ENCODE measurements at regions of chr17 and their contacts with region 1.

Region 1: DNA sequence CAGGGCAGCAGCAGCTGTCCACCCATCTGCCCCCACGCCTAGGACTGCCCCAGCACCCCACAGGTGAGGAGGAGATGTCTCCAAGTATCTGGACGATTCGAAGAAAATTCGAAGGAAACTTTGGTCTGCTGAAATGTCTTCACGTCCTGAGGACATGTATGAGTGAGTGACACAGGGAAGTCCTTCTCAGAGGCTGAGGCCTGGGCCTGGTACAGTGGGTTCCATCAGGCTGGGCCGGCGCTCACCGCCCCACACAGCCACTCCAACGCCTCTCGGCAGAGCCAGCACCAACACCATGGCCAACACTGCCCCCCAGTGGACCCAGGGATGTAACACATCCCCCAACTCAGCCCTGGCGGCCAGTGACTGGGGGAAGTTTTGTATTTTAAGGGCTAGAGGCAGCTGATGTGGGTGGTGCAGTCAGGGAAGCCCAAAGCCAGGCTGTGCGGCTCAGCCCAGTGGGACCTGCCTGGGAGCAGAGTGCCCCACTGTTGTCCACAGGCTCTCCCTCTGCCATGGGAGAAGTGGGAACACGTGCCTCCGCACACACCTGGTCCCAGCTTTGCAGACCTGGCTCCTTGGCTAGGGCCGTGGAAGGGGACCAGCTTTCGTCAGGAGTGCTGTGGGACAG is 55.8 kb upstream of the FASN start:
- DNase-seq: peak; percentile 67 to 74
- H3K4me3 ChIP-seq: no peak overlapping the region
- H3K27ac ChIP-seq: no peak overlapping the region
- H3K4me1 ChIP-seq: no peaks in the 10 kb centered on the region
- H3K27me3 ChIP-seq: no peaks in the 10 kb centered on the region
- CTCF ChIP-seq: peak; percentile 71 to 95 (median 86)
- POLR2A ChIP-seq: no peak

Region 2: DNA sequence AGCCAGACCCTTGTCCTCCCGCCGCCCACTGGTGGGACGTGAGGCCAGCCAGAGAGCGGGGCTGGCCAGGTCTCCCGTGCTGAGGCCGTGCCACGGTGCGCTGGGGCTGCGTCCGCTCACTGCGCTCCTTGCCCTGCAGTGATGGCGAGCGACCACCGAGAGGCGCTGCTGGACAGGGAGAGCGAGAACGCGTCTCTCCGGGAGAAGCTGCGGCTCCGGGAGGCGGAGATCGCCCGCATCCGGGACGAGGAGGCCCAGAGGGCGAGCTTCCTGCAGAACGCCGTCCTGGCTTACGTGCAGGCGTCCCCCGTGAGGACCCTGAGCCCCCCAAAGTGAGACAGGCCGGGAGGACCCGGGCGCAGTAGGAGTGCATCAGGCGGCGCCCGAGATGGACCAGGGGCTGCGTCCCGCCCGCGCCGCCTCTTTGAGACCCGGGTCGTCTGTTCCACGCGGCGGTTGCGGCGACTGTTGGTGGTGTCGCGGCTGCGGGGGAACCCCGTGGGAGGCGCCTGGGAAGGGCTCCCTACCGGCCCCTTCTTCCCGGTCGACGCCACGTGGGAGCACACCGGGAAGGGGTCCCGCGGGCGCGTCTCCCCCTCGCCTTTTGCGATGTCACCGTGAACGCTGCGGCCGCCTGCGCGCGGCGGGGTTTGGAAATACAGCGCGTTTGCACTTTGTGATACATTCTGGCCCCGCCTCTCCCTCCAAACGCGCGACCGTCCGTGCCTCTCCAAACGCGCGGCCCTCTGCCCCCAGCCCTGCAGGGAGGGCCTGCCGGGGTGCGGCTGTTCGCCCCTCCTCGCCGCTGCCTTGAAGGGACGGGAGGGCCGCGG is 123.2 kb before region 1 on chr17:
- intact Hi-C with region 1: loop called (anchors 5 kb)
- DNase-seq: peak; percentile 73 to 81
- H3K4me3 ChIP-seq: peak overlapping the region; percentile 29 to 35
- H3K27ac ChIP-seq: no peak overlapping the region
- H3K4me1 ChIP-seq: peaks cover 0 to 12% of the 10 kb centered on the region in 2 donors
- H3K27me3 ChIP-seq: peaks cover 0 to 3% of the 10 kb centered on the region in 2 donors
- CTCF ChIP-seq: peak; percentile 87 to 99 (median 92)
- POLR2A ChIP-seq: peak in 1 of 2 donors; percentile 6

Region 3: GRCh38 chr17:82065638-82066303 is 88.1 kb before region 1 on chr17 and contains the start of gene DUS1L:
- intact Hi-C with region 1: no loop called
- DNase-seq: peak; percentile 54 to 62
- H3K4me3 ChIP-seq: peak within 1 kb of the TSS; percentile 69 to 75
- H3K27ac ChIP-seq: peak within 1 kb of the TSS; percentile 88 to 92
- H3K4me1 ChIP-seq: peaks cover 0 to 10% of the 10 kb centered on the region in 2 donors
- H3K27me3 ChIP-seq: no peaks in the 10 kb centered on the region
- CTCF ChIP-seq: peak in 2 of 4 experiments; percentile 40 to 43
- POLR2A ChIP-seq: peak; percentile 27 to 55
- total RNA-seq, gene DUS1L: 30.2 to 70.6 (median 46.5) TPM